Dendritic cell treated with granulocyte-macrophage colony-stimulating factor and Interleukin-4, amounts not matched to agents 40 ng/mL and 50 ng/mL, for 4 days (primary cell): ENCODE measurements at regions of chr12 and their contacts with region 1.

Region 1: GRCh38 chr12:49232940-49233841 is 31.7 kb upstream of the TUBA1C start:
- H3K4me3 Mint-ChIP-seq: peak overlapping the region; percentile 77
- H3K27ac Mint-ChIP-seq: peak overlapping the region; percentile 94
- H3K4me1 Mint-ChIP-seq: peaks cover 67% of the 10 kb centered on the region
- H3K27me3 Mint-ChIP-seq: peaks cover 1% of the 10 kb centered on the region

Region 2: DNA sequence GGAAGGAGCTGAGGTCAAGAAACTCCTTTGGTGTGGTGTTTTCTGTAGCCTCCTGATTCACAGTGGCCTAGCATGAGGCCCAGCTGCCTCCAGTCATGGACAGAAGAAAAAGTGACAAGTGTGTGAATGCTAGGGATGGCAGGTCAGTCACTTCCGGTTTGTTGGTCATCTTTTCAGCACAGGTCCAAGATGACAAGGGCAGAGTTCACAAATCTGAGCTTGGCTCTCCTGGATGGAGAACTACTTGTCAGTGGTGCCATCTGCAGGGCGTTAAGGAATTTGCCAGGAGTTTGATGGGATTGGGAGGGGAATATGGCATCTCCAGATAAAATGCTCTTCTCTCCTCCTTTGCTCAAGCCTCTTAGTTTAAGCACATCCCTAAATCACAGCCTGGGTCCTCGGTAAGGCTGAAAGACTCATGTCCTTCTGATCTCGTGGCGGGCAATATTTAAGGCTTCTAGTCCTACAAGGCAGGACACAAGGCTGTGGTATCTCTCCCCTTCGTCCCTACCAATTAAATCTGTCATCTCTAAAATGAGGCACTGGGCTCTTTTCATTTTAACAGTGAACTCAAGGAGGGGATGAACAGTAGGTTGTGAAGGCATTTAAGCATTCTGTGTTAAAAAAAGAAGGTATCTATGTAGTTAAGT is 112.0 kb before region 1 on chr12:
- intact Hi-C with region 1: no loop called
- H3K4me3 Mint-ChIP-seq: no peak overlapping the region
- H3K27ac Mint-ChIP-seq: no peak overlapping the region
- H3K4me1 Mint-ChIP-seq: no peaks in the 10 kb centered on the region
- H3K27me3 Mint-ChIP-seq: no peaks in the 10 kb centered on the region

Region 3: GRCh38 chr12:49188914-49189367 is 44.2 kb before region 1 on chr12 and contains the start of gene TUBA1A:
- intact Hi-C with region 1: loop called (anchors 1 kb)
- H3K4me3 Mint-ChIP-seq: peak within 1 kb of the TSS; percentile 89
- H3K27ac Mint-ChIP-seq: peak within 1 kb of the TSS; percentile 98
- H3K4me1 Mint-ChIP-seq: peaks cover 36% of the 10 kb centered on the region
- H3K27me3 Mint-ChIP-seq: no peaks in the 10 kb centered on the region